HEK293T (cell line): ENCODE measurements at regions of chr12 and their contacts with region 1.

Region 1: DNA sequence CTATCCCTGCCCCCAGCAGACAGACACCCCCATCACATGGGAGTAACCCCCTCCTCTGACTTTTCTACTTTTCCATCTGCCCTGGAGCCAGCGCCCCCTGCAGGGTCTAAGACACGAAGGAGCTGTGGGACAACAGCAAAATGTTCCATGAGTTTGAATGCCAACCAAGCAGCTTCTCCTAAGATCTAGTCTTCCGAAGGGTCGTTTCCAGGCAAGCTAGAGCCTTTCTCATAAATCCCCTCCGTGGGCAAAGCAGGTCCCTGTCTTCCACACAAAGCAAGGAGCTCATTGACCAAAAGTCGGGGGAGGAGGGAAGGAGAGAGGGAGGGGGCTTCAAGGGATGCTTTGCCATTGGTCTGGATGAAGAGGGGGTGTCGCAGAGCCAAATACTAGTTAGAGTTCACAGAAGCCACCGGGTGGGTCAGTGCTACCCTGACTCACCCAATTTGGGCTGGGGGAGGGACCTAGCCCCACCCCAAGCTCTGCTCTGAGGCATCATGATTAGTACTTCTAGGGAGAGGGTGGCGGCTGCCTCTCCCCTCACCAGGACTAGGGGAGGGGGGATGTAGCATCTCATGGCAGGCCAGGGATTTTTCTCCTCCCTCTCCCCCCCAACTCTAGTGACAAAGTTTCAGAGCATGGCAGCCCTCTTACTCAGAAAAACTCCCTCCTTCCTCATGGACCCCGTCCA is 1.6 kb downstream of the MSI1 start:
- DNase-seq: peak; percentile 55

Region 2: DNA sequence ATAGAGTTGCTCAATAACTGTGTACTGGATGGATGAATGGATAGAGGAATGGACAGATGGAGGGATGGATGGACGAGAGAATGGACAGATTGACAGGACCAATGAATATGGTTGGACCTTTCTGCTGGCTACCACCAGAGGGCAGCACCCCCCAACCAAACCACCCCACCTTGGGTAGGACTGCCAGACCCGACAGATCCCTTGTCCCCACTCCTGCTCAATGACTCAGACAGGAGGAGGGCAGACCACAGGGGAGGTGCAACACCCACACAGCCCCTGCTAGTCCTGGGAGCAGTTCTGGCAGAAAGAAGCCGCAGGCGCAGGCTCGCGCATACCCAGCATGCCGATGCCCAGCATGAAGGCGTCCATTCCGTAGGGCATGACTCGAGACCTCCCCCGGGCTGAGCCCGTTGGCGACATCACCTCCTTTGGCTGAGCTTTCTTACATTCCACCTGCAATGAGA is 10.8 kb before region 1 on chr12:
- CTCF ChIA-PET with region 1: interaction called, 11 read pairs
- POLR2A ChIA-PET with region 1: interaction called, 3 read pairs
- DNase-seq: peak; percentile 87

Region 3: DNA sequence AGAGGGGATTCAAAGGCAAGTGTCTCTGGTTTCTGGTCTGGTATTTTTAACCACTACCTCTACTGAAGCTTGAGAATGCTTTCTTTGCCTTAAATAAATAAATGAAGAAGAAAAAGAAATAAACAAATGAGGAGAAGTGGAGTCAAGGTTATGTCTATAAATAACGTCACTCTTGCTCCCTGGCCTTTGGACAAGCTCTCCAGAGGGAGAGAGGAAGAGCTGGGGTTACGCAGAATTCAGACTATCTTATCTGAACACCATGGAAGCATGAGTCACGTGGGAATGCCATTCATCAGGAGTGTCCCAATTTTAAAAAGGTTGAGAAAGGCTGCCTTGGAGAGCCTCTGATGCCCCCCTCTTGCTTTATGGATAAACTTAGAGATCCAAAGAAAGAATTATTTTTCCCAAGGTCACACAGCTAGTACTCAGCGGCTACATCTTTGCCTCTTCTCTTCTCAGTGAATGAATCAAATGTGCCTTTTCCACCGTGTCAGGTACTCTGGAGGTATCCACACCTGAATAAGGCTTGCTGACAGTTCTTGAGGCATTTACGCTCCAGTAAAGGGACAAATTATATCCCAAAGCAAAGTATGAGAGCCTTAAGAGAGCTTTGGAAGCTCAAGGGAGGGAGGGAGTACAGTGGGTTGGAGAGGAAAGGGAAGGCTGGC is 14.5 kb after region 1 on chr12:
- CTCF ChIA-PET with region 1: interaction called, 20 read pairs
- POLR2A ChIA-PET with region 1: interaction called, 18 read pairs
- DNase-seq: no peak